Endothelial cell of umbilical vein (primary cell): ENCODE measurements at regions of chr19 and their contacts with region 1.

Region 1: GRCh38 chr19:42244347-42245220 is 2.2 kb upstream of the GSK3A start:
- DNase-seq: peak; percentile 96
- H3K4me3 ChIP-seq: peak overlapping the region; percentile 49 to 71 (median 69)
- H3K27ac ChIP-seq: peak overlapping the region; percentile 67
- H3K4me1 ChIP-seq: peaks cover 30% of the 10 kb centered on the region
- H3K27me3 ChIP-seq: no peaks in the 10 kb centered on the region
- CTCF ChIP-seq: peak; percentile 57 to 72
- POLR2A ChIP-seq: no peak

Region 2: DNA sequence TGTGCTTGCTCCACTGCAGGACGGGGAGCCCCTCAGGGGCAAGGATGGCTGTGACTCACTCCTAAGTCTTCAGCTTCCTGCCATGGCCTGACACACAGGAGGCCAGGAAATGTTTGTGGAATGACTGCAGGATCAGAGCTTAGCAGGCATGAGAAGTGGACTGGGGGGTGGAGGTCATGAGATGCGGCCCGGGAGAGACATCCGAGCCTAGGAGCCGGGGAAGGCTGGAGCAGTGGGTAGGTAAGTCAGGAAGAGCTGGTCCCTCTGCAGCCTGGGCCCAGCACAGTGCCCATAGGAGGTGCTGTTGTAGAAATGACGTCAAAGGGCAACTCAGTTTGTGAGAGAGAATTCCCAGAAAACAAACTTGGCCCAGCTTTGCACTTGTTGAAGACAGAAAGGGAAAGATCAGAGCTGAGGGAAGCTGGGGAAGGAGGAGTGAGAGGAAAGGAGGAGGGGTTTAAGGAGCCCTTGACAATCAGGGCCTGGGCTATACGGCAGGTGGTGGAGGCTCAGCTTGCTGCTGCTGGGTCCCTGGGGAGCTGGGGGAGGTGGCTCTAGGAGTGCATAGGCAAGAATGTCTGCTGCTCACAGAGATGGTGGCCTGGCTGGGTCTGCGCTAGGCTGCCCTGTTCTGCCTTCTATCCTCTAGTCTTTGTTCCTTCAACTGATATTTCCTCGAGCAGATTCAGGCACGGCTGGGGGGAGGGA is 130.8 kb before region 1 on chr19:
- CTCF ChIA-PET with region 1: interaction called, 19 read pairs
- POLR2A ChIA-PET with region 1: no interaction called
- dilution Hi-C with region 1: no loop called
- intact Hi-C with region 1: loop called (anchors 1 kb)
- DNase-seq: peak; percentile 97
- H3K4me3 ChIP-seq: no peak overlapping the region
- H3K27ac ChIP-seq: peak overlapping the region; percentile 88
- H3K4me1 ChIP-seq: peaks cover 29% of the 10 kb centered on the region
- H3K27me3 ChIP-seq: no peaks in the 10 kb centered on the region
- CTCF ChIP-seq: peak; percentile 26 to 47
- POLR2A ChIP-seq: peak; percentile 42

Region 3: DNA sequence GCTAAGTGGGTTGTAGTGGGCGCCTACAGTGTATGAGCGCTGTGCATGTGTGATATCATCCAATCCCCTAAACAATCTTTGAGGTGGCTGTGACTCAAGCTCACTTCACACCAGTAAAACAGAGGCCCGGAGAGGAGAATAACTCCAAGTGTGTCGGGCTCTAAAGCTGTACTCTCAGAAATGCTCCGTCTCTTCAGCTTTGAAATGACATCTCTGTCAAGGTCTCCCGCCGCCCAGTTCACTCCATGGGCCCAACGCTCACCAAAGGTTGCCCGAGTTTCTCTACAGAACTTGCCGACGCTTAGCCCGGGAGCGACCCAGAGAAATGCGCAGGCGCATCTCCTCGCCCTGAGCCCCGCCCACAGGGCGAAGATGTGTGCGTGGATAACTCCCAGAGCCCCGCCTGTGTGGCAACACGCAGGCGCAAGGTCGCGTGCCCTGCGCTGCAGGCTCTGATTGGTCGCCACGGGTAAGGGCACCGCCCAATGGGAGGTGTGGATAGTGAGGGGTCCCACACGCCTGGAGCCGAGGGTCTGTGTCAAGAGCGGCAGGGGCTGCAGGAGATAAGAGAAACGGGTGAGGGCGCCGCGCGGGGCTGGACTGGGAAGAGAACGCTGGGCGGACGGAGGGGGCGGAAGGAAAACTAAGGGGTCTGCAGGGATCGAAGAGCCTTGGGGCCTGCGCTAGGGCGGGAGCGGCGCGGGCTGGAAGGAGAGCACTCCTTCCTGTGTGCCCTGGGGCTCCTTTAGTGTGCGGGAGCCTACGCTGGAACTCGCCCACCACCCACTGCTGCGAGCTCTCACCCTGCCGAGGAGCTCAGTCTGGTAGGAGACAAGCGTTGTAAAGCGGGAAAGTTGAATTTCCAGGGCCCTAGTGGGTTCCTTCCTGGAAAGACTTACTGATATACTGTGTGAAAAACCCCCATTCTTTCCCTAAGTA is 24.5 kb before region 1 on chr19 and contains the start of gene ZNF526:
- CTCF ChIA-PET with region 1: interaction called, 4 read pairs
- POLR2A ChIA-PET with region 1: interaction called, 5 read pairs
- dilution Hi-C with region 1: no loop called
- intact Hi-C with region 1: loop called (anchors 1 kb)
- DNase-seq: peak; percentile 99
- H3K4me3 ChIP-seq: peak within 1 kb of the TSS; percentile 63 to 90 (median 83)
- H3K27ac ChIP-seq: peak within 1 kb of the TSS; percentile 54
- H3K4me1 ChIP-seq: peaks cover 24% of the 10 kb centered on the region
- H3K27me3 ChIP-seq: no peaks in the 10 kb centered on the region
- CTCF ChIP-seq: no peak
- POLR2A ChIP-seq: peak; percentile 74
- total RNA-seq, gene ZNF526: 13.3 and 13.4 TPM in 2 replicates

Region 4: DNA sequence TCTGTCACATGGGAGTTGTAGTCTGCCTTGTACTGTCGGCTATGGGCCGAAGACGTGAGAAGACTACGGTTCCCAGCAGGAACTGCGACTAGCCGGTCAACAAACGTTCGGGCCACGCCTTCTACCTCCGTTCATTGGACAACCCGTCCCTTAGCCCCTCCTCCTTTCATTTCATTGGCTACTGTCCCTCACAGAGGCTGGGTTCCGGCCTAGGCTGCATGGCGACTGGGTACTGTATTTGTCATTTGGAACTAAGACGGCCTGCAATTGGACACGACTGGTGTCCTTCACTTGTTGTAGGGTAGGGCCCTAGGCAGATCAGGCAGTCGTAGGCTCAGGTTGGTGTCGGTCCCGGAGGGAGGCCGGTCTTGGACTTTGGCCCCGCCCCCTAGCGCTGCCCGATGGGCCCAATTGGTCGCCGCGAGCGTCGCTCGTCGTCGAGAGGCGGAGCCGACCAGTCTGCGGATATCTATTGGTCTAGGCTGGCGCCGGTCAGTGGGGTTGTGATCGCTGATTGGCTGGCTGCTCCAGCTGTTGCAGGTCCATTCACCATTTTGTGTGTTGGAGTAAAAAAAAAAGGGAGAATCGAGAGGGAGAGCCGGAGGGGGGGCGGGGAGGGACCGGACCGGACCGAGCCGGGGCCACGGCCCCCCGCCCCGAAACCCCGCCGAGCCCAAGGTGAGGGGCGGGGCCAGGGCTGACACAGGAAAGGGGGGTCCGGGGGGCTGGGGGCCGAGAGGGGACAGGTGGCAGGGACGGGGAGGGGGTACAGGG is 24.3 kb after region 1 on chr19 and contains the start of gene CIC:
- CTCF ChIA-PET with region 1: interaction called, 23 read pairs
- POLR2A ChIA-PET with region 1: interaction called, 7 read pairs
- dilution Hi-C with region 1: no loop called
- intact Hi-C with region 1: loop called (anchors 1 kb)
- DNase-seq: peak; percentile 100
- H3K4me3 ChIP-seq: peak within 1 kb of the TSS; percentile 49 to 65 (median 64)
- H3K27ac ChIP-seq: peak within 1 kb of the TSS; percentile 91
- H3K4me1 ChIP-seq: peaks cover 22% of the 10 kb centered on the region
- H3K27me3 ChIP-seq: no peaks in the 10 kb centered on the region
- CTCF ChIP-seq: no peak
- POLR2A ChIP-seq: no peak
- total RNA-seq, gene CIC: 86.0 and 86.3 TPM in 2 replicates

Region 5: DNA sequence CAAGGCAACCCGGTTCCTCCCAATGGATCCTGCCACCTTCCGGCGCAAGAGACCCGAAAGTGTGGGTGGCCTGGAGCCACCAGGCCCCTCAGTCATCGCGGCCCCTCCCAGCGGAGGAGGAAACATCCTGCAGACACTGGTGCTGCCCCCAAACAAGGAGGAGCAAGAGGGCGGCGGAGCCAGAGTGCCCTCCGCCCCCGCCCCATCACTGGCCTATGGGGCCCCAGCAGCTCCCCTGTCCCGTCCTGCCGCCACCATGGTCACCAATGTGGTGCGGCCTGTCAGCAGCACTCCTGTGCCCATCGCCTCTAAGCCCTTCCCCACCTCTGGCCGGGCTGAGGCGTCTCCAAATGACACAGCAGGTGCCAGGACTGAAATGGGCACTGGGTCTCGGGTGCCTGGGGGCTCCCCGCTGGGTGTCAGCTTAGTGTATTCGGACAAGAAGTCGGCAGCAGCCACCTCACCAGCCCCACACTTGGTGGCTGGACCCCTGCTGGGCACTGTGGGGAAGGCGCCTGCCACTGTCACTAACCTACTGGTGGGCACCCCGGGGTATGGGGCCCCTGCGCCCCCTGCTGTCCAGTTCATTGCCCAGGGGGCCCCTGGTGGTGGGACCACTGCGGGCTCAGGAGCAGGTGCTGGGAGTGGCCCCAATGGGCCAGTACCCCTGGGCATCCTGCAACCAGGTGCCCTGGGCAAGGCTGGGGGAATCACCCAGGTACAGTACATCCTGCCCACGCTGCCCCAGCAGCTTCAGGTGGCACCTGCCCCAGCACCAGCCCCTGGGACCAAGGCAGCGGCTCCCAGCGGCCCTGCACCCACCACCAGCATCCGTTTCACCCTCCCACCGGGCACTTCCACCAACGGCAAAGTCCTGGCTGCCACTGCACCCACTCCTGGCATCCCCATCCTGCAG is 46.2 kb after region 1 on chr19:
- CTCF ChIA-PET with region 1: interaction called, 60 read pairs
- POLR2A ChIA-PET with region 1: no interaction called
- dilution Hi-C with region 1: no loop called
- intact Hi-C with region 1: loop called (anchors 1 kb)
- DNase-seq: peak; percentile 43
- H3K4me3 ChIP-seq: no peak overlapping the region
- H3K27ac ChIP-seq: no peak overlapping the region
- H3K4me1 ChIP-seq: peaks cover 6% of the 10 kb centered on the region
- H3K27me3 ChIP-seq: no peaks in the 10 kb centered on the region
- CTCF ChIP-seq: peak; percentile 84 to 86
- POLR2A ChIP-seq: no peak

Region 6: DNA sequence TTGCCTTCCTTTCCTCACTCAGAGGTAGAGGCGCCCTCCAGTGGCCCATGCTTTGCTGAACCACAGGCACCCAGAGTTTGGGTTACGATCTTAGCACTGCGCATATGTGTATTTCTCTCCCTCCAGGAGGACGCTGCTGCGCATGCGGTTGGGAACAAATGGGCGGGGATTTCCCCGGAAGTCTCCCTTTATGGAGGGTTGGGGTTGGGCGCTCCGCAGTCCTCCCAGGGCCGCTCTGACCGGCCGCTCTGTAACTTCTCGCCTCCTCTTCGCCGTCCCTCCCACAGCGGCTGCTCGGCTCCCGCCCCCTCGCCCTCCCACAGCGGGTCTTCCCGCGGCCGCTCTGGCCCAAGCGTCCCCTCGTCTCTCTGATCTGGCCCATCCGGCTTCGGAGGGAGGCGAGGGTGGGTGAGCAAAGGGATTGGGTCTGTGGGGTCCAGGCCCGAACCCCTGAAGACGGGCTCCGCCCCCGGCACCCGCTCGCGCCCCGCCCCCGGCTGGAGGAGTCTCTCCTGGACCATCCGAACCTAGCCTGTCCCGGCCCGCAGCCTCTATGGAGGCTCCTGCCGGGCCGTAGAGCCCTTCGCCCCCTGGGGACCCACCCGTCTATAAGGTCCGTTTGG is 80.8 kb after region 1 on chr19 and contains the start of gene MEGF8:
- CTCF ChIA-PET with region 1: interaction called, 7 read pairs
- POLR2A ChIA-PET with region 1: no interaction called
- dilution Hi-C with region 1: no loop called
- intact Hi-C with region 1: loop called (anchors 1 kb)
- DNase-seq: peak; percentile 100
- H3K4me3 ChIP-seq: peak within 1 kb of the TSS; percentile 50 to 78 (median 69)
- H3K27ac ChIP-seq: no peak within 1 kb of the TSS
- H3K4me1 ChIP-seq: peaks cover 8% of the 10 kb centered on the region
- H3K27me3 ChIP-seq: peaks cover 19 to 27% of the 10 kb centered on the region in 2 experiments
- CTCF ChIP-seq: peak; percentile 90 to 96
- POLR2A ChIP-seq: no peak
- total RNA-seq, gene MEGF8: 34.3 and 39.6 TPM in 2 replicates